GM12878 (cell line): ENCODE measurements at regions of chr2 and their contacts with region 1.

Region 1: GRCh38 chr2:218876562-218877219 is 4.0 kb upstream of the WNT10A start:
- DNase-seq: peak; percentile 56
- ATAC-seq: peak; percentile 4
- H3K4me3 ChIP-seq: no peak overlapping the region
- H3K27ac ChIP-seq: no peak overlapping the region
- H3K4me1 ChIP-seq: peaks cover 38% of the 10 kb centered on the region
- H3K27me3 ChIP-seq: peaks cover 10 to 23% of the 10 kb centered on the region in 2 experiments
- CTCF ChIP-seq: peak; percentile 96 to 99 (median 98); a peak in 5 of 6 replicates
- EP300 ChIP-seq: no peak
- POLR2A ChIP-seq: no peak
- RAD21 ChIP-seq: peak; percentile 100

Region 2: GRCh38 chr2:218863021-218863520 is 13.6 kb before region 1 on chr2:
- CTCF ChIA-PET with region 1: interaction called, 13 read pairs
- POLR2A ChIA-PET with region 1: interaction called, 4 read pairs
- RAD21 ChIA-PET with region 1: interaction called, 10 read pairs
- SMC1A ChIA-PET with region 1: interaction called, 7 read pairs
- in situ Hi-C with region 1: no loop called
- intact Hi-C with region 1: no loop called
- DNase-seq: no peak
- ATAC-seq: no peak
- H3K4me3 ChIP-seq: no peak overlapping the region
- H3K27ac ChIP-seq: no peak overlapping the region
- H3K4me1 ChIP-seq: 0 out of 2 replicates have a peak, but pooled peaks cover 4% of the 10 kb centered on the region
- H3K27me3 ChIP-seq: peaks cover 17 to 24% of the 10 kb centered on the region in 2 experiments
- CTCF ChIP-seq: no peak
- EP300 ChIP-seq: no peak
- POLR2A ChIP-seq: no peak
- RAD21 ChIP-seq: no peak

Region 3: DNA sequence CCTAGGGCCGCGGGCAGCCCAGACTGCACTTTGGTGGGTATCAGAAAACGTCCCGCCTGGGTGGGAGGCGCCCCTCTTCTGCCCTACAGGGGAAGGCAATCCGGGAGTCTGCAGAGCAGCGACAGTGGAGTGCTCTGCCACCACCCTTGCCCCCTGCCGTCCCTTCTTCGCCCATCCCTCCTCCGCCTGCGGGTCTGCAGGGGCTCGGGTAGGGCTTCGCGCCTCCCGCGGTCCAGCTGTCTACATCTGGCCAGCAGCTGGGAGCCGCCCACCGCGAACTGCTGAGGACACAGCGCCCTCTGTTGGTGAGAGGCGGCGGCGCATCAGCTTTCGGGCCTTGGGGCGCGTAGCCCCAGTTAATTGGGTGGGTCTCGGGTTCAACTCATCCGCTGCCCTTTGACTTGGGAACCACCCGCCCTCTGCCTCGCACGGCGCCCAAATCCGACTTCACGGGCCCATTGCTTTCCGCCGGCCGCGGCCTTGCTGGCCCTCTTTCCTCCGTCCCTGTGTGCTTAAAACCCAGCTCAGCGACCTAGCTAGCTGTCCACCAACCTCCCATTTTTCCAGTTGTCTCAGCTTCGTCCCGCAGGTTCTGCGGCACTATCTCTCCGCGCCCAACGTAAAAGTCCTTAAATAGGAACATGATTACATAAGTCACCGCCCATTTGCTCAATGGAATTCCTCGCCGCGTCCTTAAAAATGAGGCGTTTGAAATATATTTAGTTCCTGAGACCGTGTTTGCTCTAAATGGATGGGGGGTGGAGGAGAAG is 21.6 kb after region 1 on chr2:
- CTCF ChIA-PET with region 1: interaction called, 1,364 read pairs
- POLR2A ChIA-PET with region 1: interaction called, 360 read pairs
- RAD21 ChIA-PET with region 1: interaction called, 871 read pairs
- SMC1A ChIA-PET with region 1: interaction called, 780 read pairs
- in situ Hi-C with region 1: no loop called
- intact Hi-C with region 1: loop called (anchors 1 kb)
- DNase-seq: no peak
- ATAC-seq: peak; percentile 54
- H3K4me3 ChIP-seq: peak overlapping the region; percentile 67; the same call in 1 of the 2 replicates
- H3K27ac ChIP-seq: peak overlapping the region; percentile 95; the same call in 1 of the 2 replicates
- H3K4me1 ChIP-seq: peaks cover 40% of the 10 kb centered on the region
- H3K27me3 ChIP-seq: no peaks in the 10 kb centered on the region
- CTCF ChIP-seq: peak; percentile 93 to 98 (median 98)
- EP300 ChIP-seq: no peak
- POLR2A ChIP-seq: no peak; the same call in 1 of the 2 replicates
- RAD21 ChIP-seq: peak; percentile 94

Region 4: GRCh38 chr2:218915021-218915420 is 38.3 kb after region 1 on chr2:
- CTCF ChIA-PET with region 1: interaction called, 1,364 read pairs
- POLR2A ChIA-PET with region 1: interaction called, 3 read pairs
- RAD21 ChIA-PET with region 1: interaction called, 14 read pairs
- SMC1A ChIA-PET with region 1: interaction called, 26 read pairs
- in situ Hi-C with region 1: no loop called
- intact Hi-C with region 1: no loop called
- DNase-seq: no peak
- ATAC-seq: no peak
- H3K4me3 ChIP-seq: no peak overlapping the region
- H3K27ac ChIP-seq: no peak overlapping the region
- H3K4me1 ChIP-seq: no peaks in the 10 kb centered on the region; the same call in 1 of the 2 replicates
- H3K27me3 ChIP-seq: no peaks in the 10 kb centered on the region; a peak in 1 of 4 replicates
- CTCF ChIP-seq: no peak
- EP300 ChIP-seq: no peak
- POLR2A ChIP-seq: no peak
- RAD21 ChIP-seq: no peak

Region 5: DNA sequence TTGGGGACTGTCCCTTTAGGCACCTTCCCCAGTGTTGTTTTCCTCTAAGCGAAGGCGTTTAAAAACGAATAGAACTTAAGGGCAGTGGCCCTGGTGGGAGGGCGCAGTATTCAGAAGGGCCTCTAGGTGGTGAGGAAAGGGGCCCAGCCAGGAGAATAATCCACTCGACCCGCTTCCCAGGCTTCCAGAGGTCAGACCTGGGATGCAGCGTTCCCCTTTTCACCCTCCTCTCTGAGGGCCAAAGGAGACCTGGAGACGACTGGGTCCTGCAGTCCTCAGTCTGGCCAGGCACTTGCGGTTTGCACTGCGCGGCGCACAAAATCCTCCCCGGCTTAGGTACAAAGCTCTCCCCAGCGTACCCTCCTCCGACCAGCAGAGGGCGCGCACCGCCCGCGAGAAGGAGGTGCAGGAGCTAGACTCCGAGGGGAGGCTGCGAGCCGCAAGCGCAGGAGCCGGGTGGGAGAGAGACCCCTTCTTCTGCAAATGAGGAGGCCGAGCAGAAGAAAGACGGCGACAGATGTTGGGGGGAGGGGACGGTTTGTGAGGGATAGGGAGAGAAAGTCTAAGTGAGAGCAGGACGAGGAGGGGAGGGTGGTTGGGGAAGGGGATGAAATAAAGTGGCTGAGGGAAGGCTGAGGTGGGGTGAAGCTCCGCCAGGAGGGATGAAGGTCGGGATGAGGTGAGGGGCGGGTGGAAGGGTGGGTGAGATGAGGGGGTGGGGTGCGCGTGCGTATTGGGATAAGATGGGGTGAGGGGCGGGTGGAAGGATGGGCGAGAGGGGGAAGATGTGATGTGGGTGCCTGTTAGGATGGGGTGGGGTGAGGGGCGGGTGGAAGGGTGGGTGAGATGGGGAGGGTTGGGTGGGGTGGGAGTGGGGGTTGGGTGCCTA is 103.4 kb after region 1 on chr2:
- CTCF ChIA-PET with region 1: interaction called, 53 read pairs
- POLR2A ChIA-PET with region 1: interaction called, 3 read pairs
- RAD21 ChIA-PET with region 1: interaction called, 21 read pairs
- SMC1A ChIA-PET with region 1: interaction called, 11 read pairs
- in situ Hi-C with region 1: no loop called
- intact Hi-C with region 1: loop called (anchors 2 kb)
- DNase-seq: peak; percentile 24
- ATAC-seq: peak; percentile 99
- H3K4me3 ChIP-seq: 0 out of 2 replicates have a peak overlapping the region, but pooled peaks have one; percentile 44
- H3K27ac ChIP-seq: no peak overlapping the region
- H3K4me1 ChIP-seq: no peaks in the 10 kb centered on the region; the same call in 1 of the 2 replicates
- H3K27me3 ChIP-seq: peaks cover 24 to 30% of the 10 kb centered on the region in 2 experiments
- CTCF ChIP-seq: peak; percentile 87 to 93 (median 88)
- EP300 ChIP-seq: no peak
- POLR2A ChIP-seq: no peak
- RAD21 ChIP-seq: peak; percentile 69

Region 6: DNA sequence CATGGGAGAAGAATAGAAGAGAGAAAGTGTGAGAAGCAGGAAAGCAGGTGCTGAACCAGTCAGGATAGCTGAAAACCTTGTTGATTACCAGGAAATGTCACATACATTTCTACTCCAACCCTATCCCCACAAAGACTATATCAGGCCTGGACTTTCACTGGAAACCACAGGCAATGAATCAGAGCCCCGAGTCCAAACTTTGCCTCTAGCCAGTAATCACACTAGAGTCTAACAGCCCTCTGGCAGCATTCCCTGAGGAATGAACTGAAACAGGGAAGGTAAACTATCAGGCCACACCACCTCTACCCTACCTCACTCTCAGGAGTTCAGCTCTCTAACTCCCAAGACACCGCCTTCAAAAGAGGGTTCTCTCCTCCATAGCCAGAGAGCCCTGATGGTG is 202.7 kb after region 1 on chr2:
- CTCF ChIA-PET with region 1: no interaction called
- POLR2A ChIA-PET with region 1: no interaction called
- RAD21 ChIA-PET with region 1: no interaction called
- SMC1A ChIA-PET with region 1: no interaction called
- in situ Hi-C with region 1: no loop called
- intact Hi-C with region 1: no loop called
- DNase-seq: no peak
- ATAC-seq: no peak
- H3K4me3 ChIP-seq: no peak overlapping the region
- H3K27ac ChIP-seq: no peak overlapping the region
- H3K4me1 ChIP-seq: peaks cover 6% of the 10 kb centered on the region
- H3K27me3 ChIP-seq: no peaks in the 10 kb centered on the region
- CTCF ChIP-seq: no peak
- EP300 ChIP-seq: no peak
- POLR2A ChIP-seq: no peak
- RAD21 ChIP-seq: no peak